Naive thymus-derived CD4-positive, alpha-beta T cell (primary cell): ENCODE measurements at regions of chr20 and their contacts with region 1.

Region 1: DNA sequence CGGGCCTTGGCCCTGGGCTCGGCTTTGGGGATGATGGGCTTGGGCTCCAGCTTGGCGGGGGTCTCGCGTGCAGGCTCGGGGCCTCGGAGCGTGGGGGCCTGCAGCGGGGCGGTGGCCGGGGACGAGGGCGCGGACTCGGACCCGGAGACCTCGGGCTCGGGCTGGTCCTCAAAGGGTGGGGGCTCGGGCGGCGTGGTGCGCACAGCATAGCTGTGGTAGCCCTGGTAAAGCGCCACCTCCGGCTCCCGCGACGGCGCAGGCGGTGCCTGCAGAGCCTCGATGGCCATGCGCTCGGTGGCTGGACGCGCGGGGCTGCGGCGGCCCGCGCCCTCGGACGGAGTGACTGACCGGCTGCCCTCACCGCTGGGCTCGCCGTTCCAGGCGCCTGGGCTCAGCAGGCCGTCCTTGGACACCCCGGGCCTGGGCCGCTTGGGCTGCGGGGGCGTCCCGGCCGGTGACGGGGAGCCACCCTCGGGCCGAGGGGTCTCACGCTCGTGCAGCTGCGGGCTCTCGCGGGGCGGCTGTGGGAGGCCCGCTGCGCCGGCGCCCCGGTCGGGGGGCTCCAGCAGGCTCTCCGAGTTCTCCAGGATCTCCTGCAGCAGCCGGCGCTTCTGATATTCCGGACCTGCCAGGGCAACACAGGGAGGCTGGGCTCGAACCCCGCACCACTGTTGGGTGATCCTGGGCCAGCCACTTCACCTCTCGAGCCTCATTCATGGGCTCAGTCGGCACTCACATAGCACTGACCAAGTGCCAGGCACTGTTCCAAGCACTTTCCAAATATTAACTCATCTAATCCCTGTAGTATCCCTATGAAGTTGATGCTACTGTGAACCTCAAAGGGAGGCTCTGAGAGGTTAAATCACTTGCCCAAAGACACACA is 71.0 kb downstream of the JPH2 start:
- DNase-seq: no peak
- ATAC-seq: no peak
- H3K4me3 ChIP-seq: no peak overlapping the region
- H3K4me3 Mint-ChIP-seq: peak overlapping the region in 1 of 10 donors; percentile 23
- H3K27ac ChIP-seq: no peak overlapping the region
- H3K27ac Mint-ChIP-seq: peak overlapping the region in 1 of 9 donors; percentile 49
- H3K4me1 ChIP-seq: no peaks in the 10 kb centered on the region
- H3K4me1 Mint-ChIP-seq: peaks cover 0 to 16% (median 5%) of the 10 kb centered on the region in 7 donors
- H3K27me3 ChIP-seq: no peaks in the 10 kb centered on the region
- H3K27me3 Mint-ChIP-seq: peaks cover 8 to 34% (median 20%) of the 10 kb centered on the region in 5 donors

Region 2: DNA sequence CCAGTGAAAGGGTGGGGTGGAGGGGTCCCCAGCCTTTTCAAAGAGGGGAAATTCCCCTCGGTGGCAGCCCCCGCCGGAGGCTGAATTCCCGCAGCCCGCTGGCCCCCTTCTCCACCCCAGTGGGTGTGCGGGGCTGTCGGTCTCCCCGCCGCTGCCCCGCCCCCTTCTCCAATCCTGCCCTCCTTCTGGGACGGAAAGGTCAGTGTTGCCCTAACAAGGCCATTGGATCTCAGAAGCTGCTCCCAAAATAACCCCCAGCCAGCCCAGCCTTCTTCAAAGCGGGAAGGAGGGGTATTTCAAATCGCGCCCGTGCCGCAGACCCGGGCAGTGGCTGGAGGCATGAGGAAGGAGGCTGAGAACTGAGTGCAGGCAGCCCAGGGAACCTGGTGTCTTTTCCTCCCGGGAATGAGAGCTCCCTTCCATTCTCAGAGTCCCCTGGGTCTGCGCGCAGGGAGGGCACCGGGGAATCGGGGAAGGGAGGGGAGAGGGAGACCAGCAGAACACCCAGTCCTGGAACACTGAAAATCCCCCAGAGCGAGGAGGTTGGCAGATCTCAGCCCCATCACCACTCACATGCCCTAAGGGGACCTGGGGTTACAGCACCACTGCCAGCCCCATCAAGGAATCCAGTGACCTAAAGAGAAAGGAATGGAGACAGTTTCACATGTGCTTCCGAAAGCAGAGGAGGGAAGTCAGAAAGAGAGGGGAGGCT is 71.2 kb after region 1 on chr20 and contains the start of gene JPH2:
- CTCF ChIA-PET with region 1: interaction called, 60 read pairs
- POLR2A ChIA-PET with region 1: interaction called, 15 read pairs
- intact Hi-C with region 1: loop called in 1 of 2 experiments (anchors 1 kb)
- DNase-seq: no peak
- ATAC-seq: no peak
- H3K4me3 ChIP-seq: no peak within 1 kb of the TSS
- H3K4me3 Mint-ChIP-seq: peak within 1 kb of the TSS in 9 of 10 donors; percentile 38 to 75 (median 47)
- H3K27ac ChIP-seq: no peak within 1 kb of the TSS
- H3K27ac Mint-ChIP-seq: no peak within 1 kb of the TSS
- H3K4me1 ChIP-seq: peaks cover 0 to 11% of the 10 kb centered on the region in 2 donors
- H3K4me1 Mint-ChIP-seq: peaks cover 4 to 19% (median 12%) of the 10 kb centered on the region in 7 donors
- H3K27me3 ChIP-seq: peaks cover 0 to 12% of the 10 kb centered on the region in 2 donors
- H3K27me3 Mint-ChIP-seq: peaks cover 55 to 71% (median 66%) of the 10 kb centered on the region in 5 donors
- total RNA-seq, gene JPH2: 0.07 to 0.17 TPM in 2 of 5 experiments, not detected in the others

Region 3: GRCh38 chr20:44196271-44196670 is 80.3 kb after region 1 on chr20:
- CTCF ChIA-PET with region 1: interaction called, 60 read pairs
- POLR2A ChIA-PET with region 1: no interaction called
- intact Hi-C with region 1: no loop called
- DNase-seq: peak in 1 of 9 donors; percentile 14
- ATAC-seq: peak; percentile 50
- H3K4me3 ChIP-seq: no peak overlapping the region
- H3K4me3 Mint-ChIP-seq: no peak overlapping the region
- H3K27ac ChIP-seq: no peak overlapping the region
- H3K27ac Mint-ChIP-seq: peak overlapping the region in 2 of 9 donors; percentile 22 to 30
- H3K4me1 ChIP-seq: no peaks in the 10 kb centered on the region
- H3K4me1 Mint-ChIP-seq: peaks cover 16 to 29% (median 20%) of the 10 kb centered on the region in 7 donors
- H3K27me3 ChIP-seq: no peaks in the 10 kb centered on the region
- H3K27me3 Mint-ChIP-seq: peaks cover 0 to 6% (median 0%) of the 10 kb centered on the region in 5 donors

Region 4: DNA sequence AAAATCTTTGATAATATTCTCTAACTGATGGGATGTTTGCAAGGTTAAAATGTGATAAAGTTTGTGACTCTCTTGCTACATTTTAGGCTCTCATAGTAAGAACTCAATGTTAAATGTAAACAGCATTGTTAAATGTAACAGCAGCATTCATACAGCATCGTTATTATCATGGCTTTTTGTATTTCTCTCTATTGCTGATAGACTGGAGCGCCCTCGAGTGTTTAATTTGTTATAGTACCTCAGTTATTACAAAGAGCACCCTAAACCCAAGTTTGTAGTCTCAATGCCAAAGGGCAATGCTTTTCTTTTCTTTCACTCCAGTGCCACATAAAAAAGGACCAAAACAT is 344.8 kb after region 1 on chr20:
- CTCF ChIA-PET with region 1: no interaction called
- POLR2A ChIA-PET with region 1: no interaction called
- intact Hi-C with region 1: loop called in 1 of 2 experiments (anchors 2 kb)
- DNase-seq: peak in 5 of 9 donors; percentile 16 to 31 (median 24)
- ATAC-seq: peak; percentile 34
- H3K4me3 ChIP-seq: no peak overlapping the region
- H3K4me3 Mint-ChIP-seq: no peak overlapping the region
- H3K27ac ChIP-seq: no peak overlapping the region
- H3K27ac Mint-ChIP-seq: peak overlapping the region in 1 of 9 donors; percentile 43
- H3K4me1 ChIP-seq: no peaks in the 10 kb centered on the region
- H3K4me1 Mint-ChIP-seq: no peaks in the 10 kb centered on the region
- H3K27me3 ChIP-seq: no peaks in the 10 kb centered on the region
- H3K27me3 Mint-ChIP-seq: peaks cover 0 to 5% (median 0%) of the 10 kb centered on the region in 5 donors

Region 5: DNA sequence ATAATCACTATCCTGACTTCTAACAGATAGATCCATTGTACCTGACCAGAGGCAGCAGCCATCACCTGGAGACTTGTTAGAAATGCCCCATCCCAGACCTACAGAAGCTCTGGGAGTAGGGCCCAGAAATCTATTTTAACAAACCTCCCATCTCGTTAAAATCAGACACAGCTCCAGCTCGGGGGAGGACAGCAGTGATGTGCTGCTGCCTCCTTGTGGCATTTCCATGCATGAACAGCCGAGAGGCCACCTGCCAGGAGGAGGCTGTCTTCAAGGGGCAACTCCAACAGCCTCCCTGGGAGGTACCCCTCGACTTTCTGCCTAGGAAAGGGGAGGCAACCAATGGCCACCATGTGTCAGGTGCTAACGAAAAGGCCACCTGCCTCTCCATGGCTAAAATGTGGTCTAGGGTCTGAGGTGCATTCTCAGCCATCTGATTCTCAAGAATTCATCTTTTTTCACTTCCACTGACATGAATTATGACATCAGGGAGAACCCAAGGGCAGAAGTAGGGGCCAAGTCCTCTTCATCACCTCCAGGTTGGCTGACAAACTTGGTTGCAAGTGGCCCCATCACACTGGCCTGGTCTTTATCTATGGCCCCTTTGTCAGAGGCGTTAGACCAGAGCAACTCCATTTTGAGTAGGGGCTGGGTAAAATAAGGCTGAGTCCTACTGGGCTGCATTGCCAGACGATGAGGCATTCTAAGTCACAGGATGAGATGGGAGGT is 617.5 kb after region 1 on chr20:
- CTCF ChIA-PET with region 1: no interaction called
- POLR2A ChIA-PET with region 1: no interaction called
- intact Hi-C with region 1: loop called in 1 of 2 experiments (anchors 1 kb)
- DNase-seq: peak; percentile 34 to 73 (median 57)
- ATAC-seq: peak; percentile 77
- H3K4me3 ChIP-seq: no peak overlapping the region
- H3K4me3 Mint-ChIP-seq: no peak overlapping the region
- H3K27ac ChIP-seq: no peak overlapping the region
- H3K27ac Mint-ChIP-seq: peak overlapping the region in 1 of 9 donors; percentile 32
- H3K4me1 ChIP-seq: no peaks in the 10 kb centered on the region
- H3K4me1 Mint-ChIP-seq: peaks cover 11 to 23% (median 20%) of the 10 kb centered on the region in 7 donors
- H3K27me3 ChIP-seq: no peaks in the 10 kb centered on the region
- H3K27me3 Mint-ChIP-seq: no peaks in the 10 kb centered on the region